AG04449 (cell line): ENCODE measurements at regions of chr10 and their contacts with region 1.

Region 1: DNA sequence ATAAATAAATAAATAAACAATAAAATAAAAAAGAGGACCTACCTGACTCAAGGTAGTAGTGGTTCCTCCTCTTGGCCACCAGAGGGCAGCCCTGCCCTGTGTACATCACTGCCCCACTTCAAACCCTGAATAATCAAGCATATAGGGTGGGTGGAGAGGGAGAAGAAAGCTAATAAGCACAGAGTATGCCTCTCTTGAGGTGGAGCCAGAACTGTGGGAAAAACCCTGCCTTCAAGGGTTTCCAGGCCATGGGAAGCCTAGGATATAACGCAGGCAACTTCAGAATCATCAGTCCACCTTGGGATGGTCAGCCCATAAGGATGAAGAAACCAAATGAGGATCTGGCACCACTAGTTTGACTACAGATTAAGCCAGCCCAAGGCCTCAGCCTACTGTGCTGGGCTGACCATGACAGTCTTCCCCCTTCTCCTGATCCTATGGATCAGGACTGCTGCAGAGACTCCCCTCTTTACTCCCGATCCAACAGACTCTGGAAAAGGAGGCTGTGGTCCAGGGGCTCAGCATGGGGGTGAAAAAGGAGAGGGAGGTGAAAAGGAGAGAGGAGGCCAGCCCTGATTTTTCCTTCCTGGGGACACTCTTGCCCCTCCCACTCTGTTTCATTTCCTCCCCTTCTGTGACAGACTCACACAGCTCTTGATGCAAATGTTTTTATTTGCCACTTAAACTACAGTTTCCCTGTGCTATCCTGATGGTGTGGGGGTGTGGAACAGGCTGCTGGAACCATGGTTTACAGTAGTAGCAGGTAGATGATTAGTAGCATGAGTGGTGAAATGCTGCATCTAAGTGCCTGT is 10.1 kb downstream of the AVPI1 start:
- DNase-seq: no peak
- H3K4me3 ChIP-seq: no peak overlapping the region
- CTCF ChIP-seq: peak; percentile 81

Region 2: DNA sequence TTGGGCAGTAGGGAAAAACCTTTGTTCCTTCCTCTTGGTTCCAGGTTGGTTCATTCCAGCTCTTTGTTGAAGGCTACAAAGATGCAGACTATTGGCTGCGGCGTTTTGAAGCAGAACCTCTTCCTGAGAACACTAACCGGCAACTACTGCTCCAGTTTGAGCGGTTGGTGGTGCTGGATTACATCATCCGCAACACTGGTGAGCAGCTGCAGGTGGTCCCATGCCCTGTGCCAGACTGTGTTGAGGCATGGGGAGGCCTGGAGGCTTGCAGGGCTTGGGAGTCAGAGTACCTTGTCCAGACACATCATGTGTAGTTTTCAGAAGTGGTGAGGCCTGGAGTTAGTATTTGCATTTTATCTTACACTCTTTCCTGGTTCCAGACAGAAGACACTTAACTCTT is 20.2 kb before region 1 on chr10:
- CTCF ChIA-PET with region 1: interaction called, 94 read pairs
- POLR2A ChIA-PET with region 1: no interaction called
- DNase-seq: no peak
- H3K4me3 ChIP-seq: no peak overlapping the region
- CTCF ChIP-seq: no peak

Region 3: GRCh38 chr10:97686962-97687784 is 10.2 kb after region 1 on chr10 and contains the start of gene AVPI1:
- CTCF ChIA-PET with region 1: interaction called, 82 read pairs
- POLR2A ChIA-PET with region 1: interaction called, 5 read pairs
- DNase-seq: peak; percentile 82
- H3K4me3 ChIP-seq: peak within 1 kb of the TSS; percentile 82
- CTCF ChIP-seq: no peak

Region 4: GRCh38 chr10:97714048-97714371 is 37.0 kb after region 1 on chr10:
- CTCF ChIA-PET with region 1: interaction called, 305 read pairs
- POLR2A ChIA-PET with region 1: no interaction called
- DNase-seq: no peak
- H3K4me3 ChIP-seq: peak overlapping the region; percentile 69
- CTCF ChIP-seq: peak; percentile 33

Region 5: GRCh38 chr10:98262571-98262970 is 585.6 kb after region 1 on chr10:
- CTCF ChIA-PET with region 1: no interaction called
- POLR2A ChIA-PET with region 1: no interaction called
- DNase-seq: no peak
- H3K4me3 ChIP-seq: no peak overlapping the region
- CTCF ChIP-seq: peak; percentile 49